ENCODE measurements at regions of chr5 and their contacts with region 1.

Region 1: DNA sequence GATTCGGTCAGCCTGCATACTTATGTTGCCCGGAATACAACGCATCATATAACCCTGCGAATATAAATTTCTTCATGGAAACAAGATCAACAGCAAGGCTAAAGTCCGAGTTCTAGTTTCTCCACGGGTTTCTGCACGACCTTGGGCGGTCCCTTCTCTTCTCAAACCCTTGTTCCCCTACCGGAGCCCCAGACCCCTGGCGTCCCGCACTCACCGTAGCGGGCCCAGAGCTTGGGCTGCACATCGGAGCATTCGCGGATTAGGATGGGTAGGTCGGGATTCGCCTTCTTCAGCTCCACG is 438 bp downstream of the NDUFA2 start:
- DNase-seq: no peak
- ATAC-seq: no peak
- H3K4me3 ChIP-seq: peak overlapping the region; percentile 96
- H3K4me3 Mint-ChIP-seq: peak overlapping the region; percentile 98
- H3K27ac ChIP-seq: peak overlapping the region; percentile 96 to 98
- H3K27ac Mint-ChIP-seq: peak overlapping the region; percentile 96
- H3K4me1 ChIP-seq: peaks cover 36% of the 10 kb centered on the region
- H3K4me1 Mint-ChIP-seq: peaks cover 57% of the 10 kb centered on the region
- H3K27me3 ChIP-seq: no peaks in the 10 kb centered on the region
- H3K27me3 Mint-ChIP-seq: no peaks in the 10 kb centered on the region
- CTCF ChIP-seq: no peak

Region 2: GRCh38 chr5:140547508-140548299 is 99.3 kb before region 1 on chr5 and contains the start of gene EIF4EBP3:
- CTCF ChIA-PET with region 1: interaction called, 5 read pairs
- POLR2A ChIA-PET with region 1: interaction called, 76 read pairs
- intact Hi-C with region 1: no loop called
- DNase-seq: peak; percentile 79 to 95 (median 86)
- ATAC-seq: peak; percentile 97
- H3K4me3 ChIP-seq: peak within 1 kb of the TSS; percentile 79
- H3K4me3 Mint-ChIP-seq: peak within 1 kb of the TSS; percentile 96
- H3K27ac ChIP-seq: peak within 1 kb of the TSS; percentile 88 to 89
- H3K27ac Mint-ChIP-seq: peak within 1 kb of the TSS; percentile 96
- H3K4me1 ChIP-seq: peaks cover 31% of the 10 kb centered on the region
- H3K4me1 Mint-ChIP-seq: peaks cover 38% of the 10 kb centered on the region
- H3K27me3 ChIP-seq: no peaks in the 10 kb centered on the region
- H3K27me3 Mint-ChIP-seq: no peaks in the 10 kb centered on the region
- CTCF ChIP-seq: peak; percentile 72
- total RNA-seq, gene EIF4EBP3: 12.7 to 15.1 TPM

Region 3: DNA sequence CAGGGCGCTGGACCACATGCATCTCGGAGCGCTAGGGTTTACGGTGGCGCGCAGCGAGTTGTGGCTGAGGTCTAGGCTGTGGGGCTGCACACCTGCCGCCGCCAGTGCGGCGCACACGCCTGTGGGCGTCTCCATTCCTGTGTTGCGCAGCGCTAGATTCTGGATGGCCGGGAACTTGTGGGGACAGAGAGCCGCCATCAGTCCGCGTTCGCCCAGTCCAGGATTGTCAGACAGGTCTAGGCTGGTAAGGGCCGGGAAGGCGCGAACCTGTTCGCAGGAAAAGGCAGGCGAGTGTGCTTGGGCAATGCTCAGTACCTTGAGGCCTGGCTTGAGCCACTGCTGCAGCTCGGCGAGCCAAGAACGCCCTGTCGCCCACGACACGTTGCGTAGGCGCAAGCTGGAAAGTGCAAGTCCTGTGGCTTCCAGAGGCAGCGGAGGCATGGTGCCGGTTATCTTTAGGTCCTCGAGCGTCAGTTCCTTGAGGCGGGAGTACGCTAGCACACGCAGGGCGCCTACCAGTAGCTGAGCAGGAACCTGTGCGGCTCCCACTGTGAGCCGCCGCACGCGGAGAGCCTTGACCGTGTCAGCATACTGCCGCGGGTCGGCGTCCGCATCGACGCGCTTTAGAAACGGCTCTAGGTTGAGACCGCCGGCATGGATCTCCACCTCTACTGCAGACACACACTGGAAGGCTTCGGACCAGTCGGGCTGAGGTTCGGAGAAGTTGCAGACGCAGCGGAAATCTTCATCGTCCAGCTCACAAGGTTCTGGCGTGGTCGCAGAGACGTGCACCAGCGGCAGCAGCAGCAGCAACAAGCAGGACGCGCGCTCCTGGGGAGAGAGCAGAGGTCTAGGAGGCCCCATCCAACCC is 14.6 kb before region 1 on chr5:
- CTCF ChIA-PET with region 1: interaction called, 7 read pairs
- POLR2A ChIA-PET with region 1: interaction called, 45 read pairs
- intact Hi-C with region 1: no loop called
- DNase-seq: peak; percentile 25 to 80 (median 47)
- ATAC-seq: peak; percentile 79
- H3K4me3 ChIP-seq: peak overlapping the region; percentile 72
- H3K4me3 Mint-ChIP-seq: peak overlapping the region; percentile 91
- H3K27ac ChIP-seq: no peak overlapping the region
- H3K27ac Mint-ChIP-seq: peak overlapping the region; percentile 79
- H3K4me1 ChIP-seq: peaks cover 23% of the 10 kb centered on the region
- H3K4me1 Mint-ChIP-seq: peaks cover 24% of the 10 kb centered on the region
- H3K27me3 ChIP-seq: no peaks in the 10 kb centered on the region
- H3K27me3 Mint-ChIP-seq: no peaks in the 10 kb centered on the region
- CTCF ChIP-seq: no peak

Region 4: GRCh38 chr5:140690941-140691924 is 44.2 kb after region 1 on chr5 and contains the starts of genes HARS1 and HARS2:
- CTCF ChIA-PET with region 1: interaction called, 6 read pairs
- POLR2A ChIA-PET with region 1: interaction called, 36 read pairs
- intact Hi-C with region 1: no loop called
- DNase-seq: peak; percentile 61 to 93 (median 78)
- ATAC-seq: peak; percentile 90
- H3K4me3 ChIP-seq: peak within 1 kb of the TSS; percentile 98
- H3K4me3 Mint-ChIP-seq: peak within 1 kb of the TSS; percentile 99
- H3K27ac ChIP-seq: peak within 1 kb of the TSS; percentile 64 to 90
- H3K27ac Mint-ChIP-seq: peak within 1 kb of the TSS; percentile 97
- H3K4me1 ChIP-seq: peaks cover 28% of the 10 kb centered on the region
- H3K4me1 Mint-ChIP-seq: peaks cover 35% of the 10 kb centered on the region
- H3K27me3 ChIP-seq: no peaks in the 10 kb centered on the region
- H3K27me3 Mint-ChIP-seq: no peaks in the 10 kb centered on the region
- CTCF ChIP-seq: no peak
- total RNA-seq, gene HARS1: 53.5 to 54.1 TPM
- total RNA-seq, gene HARS2: 38.1 to 38.3 TPM

Region 5: GRCh38 chr5:140710899-140711552 is 64.0 kb after region 1 on chr5:
- CTCF ChIA-PET with region 1: no interaction called
- POLR2A ChIA-PET with region 1: interaction called, 45 read pairs
- intact Hi-C with region 1: no loop called
- DNase-seq: peak; percentile 70 to 97 (median 82)
- ATAC-seq: peak; percentile 77
- H3K4me3 ChIP-seq: peak overlapping the region; percentile 70
- H3K4me3 Mint-ChIP-seq: peak overlapping the region; percentile 99
- H3K27ac ChIP-seq: peak overlapping the region; percentile 87 to 88
- H3K27ac Mint-ChIP-seq: peak overlapping the region; percentile 98
- H3K4me1 ChIP-seq: peaks cover 9% of the 10 kb centered on the region
- H3K4me1 Mint-ChIP-seq: peaks cover 27% of the 10 kb centered on the region
- H3K27me3 ChIP-seq: no peaks in the 10 kb centered on the region
- H3K27me3 Mint-ChIP-seq: peaks cover 8% of the 10 kb centered on the region
- CTCF ChIP-seq: no peak